ENCODE measurements at regions of chr2 and their contacts with region 1.

Region 1: DNA sequence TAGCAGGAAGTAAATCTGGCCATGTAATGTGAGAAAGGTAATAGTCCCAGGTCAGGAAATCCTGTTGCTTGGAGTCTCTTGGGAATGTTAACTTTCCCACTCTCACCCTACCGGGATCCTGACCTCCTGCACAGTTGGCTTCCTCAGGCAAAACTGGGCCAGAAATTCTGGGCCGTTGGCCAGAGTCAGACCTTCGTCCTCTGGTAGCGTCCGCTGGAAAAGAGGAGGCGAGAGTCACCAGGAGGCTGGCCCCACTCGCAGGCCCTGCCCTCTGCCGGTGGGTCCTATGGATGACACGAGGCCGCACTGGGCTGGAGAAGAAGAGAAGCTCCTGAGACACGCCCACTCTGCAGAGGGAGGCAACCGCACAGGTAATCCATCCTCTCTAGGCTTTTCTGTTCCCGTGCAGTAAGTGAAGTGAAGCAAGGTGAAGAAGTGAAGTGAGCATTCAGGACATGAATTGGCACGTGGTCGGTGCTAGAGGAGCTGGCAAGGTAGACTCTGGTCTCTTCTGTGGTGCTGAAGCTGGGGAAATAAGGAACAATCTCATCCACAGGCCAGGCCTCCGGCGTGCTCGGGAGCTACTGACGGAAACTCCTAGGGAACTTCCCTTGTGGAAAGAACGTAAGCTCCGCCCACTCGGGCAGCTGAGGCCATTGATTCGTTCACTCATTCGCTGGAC is 182.7 kb upstream of the GLI2 start:
- H3K4me3 ChIP-seq: peak overlapping the region; percentile 24
- H3K27ac ChIP-seq: no peak overlapping the region
- H3K4me1 ChIP-seq: no peaks in the 10 kb centered on the region
- CTCF ChIP-seq: 0 out of 2 replicates have a peak, but pooled peaks have one; percentile 18

Region 2: DNA sequence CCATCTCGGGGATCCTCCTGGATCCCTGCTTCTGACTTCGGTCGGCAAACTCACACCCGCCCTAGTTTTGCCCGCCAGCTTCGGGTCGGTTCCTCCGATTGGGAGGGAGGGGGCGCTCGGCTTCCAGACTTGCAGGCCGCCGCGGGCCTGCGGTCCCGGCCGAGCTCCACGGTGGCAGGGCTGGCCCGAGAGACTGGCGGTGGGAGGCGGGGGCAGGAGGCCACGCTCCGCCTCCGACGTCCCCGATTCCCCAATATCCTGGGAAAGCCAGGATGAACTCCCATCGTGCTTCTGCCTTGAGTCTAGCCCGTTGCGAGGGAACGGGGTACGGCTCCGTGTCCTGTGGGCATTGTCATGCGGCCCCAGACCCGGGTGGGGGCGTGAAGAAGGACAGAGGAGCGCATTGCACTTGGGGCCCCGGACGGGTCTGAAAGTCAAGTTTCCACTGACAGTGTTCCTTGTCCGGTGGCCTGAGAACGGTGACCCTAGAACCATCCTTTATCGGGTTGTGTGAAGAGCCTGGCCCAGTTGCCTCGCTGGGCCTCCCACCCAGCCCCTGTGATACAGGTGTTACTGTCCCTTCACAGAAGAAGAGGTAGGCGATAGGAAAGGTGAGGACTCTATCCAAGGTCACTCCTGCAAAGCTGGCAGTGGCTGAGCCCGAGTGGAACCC is 209.4 kb before region 1 on chr2:
- CTCF ChIA-PET with region 1: interaction called, 36 read pairs
- POLR2A ChIA-PET with region 1: interaction called, 3 read pairs
- H3K4me3 ChIP-seq: no peak overlapping the region
- H3K27ac ChIP-seq: no peak overlapping the region
- H3K4me1 ChIP-seq: peaks cover 13% of the 10 kb centered on the region
- CTCF ChIP-seq: peak; percentile 90

Region 3: DNA sequence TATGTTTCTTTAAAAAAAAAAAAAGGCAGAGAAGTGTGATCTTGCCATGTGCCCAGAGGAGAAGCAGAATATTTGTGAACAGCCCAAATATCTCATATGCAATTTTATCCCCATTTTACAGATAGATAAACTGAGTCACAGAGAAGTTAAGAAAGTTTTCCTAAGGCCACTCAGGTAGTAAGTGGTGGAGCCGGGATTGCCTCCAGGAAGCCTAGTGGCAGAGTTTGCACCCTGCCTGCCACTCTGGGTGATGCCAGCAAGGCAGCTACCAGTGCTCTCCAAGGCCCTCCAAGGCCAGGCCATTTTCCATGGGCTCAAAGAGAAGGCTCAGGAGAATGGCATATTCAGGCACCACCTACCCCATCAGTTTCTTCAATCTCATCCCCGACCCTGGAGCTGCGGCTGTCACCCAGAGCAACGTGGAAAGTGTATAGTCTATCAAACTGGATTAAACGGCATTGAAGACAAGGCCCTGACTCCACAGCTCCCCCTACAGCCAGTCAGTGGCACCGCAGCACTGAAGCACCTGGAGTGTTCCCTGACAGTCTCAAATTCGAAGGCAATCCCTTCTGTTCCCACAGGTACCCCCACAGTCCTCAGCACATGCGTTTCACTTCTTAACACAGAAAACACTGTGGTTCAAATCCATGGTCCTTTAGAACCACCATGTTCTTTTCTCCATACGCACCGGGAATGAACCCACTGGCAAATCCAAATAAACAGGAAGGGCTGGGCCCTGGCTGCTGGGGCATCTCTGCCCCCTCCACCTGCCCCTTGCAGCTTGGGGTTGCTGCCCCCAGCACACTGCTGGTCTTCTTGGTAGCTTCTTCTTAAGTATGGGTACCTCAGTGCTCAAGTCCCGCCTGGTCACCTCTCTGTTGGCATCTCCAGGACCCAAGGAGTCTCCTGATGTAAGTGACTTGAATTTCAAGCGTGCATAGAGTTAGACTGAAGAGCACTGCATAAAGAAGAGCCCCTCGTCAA is 31.7 kb before region 1 on chr2:
- CTCF ChIA-PET with region 1: interaction called, 14 read pairs
- POLR2A ChIA-PET with region 1: no interaction called
- H3K4me3 ChIP-seq: no peak overlapping the region
- H3K27ac ChIP-seq: no peak overlapping the region
- H3K4me1 ChIP-seq: no peaks in the 10 kb centered on the region
- CTCF ChIP-seq: peak; percentile 41

Region 4: GRCh38 chr2:120541553-120541932 is 11.4 kb before region 1 on chr2:
- CTCF ChIA-PET with region 1: interaction called, 18 read pairs
- POLR2A ChIA-PET with region 1: no interaction called
- H3K4me3 ChIP-seq: no peak overlapping the region
- H3K27ac ChIP-seq: no peak overlapping the region
- H3K4me1 ChIP-seq: peaks cover 9% of the 10 kb centered on the region
- CTCF ChIP-seq: no peak

Region 5: DNA sequence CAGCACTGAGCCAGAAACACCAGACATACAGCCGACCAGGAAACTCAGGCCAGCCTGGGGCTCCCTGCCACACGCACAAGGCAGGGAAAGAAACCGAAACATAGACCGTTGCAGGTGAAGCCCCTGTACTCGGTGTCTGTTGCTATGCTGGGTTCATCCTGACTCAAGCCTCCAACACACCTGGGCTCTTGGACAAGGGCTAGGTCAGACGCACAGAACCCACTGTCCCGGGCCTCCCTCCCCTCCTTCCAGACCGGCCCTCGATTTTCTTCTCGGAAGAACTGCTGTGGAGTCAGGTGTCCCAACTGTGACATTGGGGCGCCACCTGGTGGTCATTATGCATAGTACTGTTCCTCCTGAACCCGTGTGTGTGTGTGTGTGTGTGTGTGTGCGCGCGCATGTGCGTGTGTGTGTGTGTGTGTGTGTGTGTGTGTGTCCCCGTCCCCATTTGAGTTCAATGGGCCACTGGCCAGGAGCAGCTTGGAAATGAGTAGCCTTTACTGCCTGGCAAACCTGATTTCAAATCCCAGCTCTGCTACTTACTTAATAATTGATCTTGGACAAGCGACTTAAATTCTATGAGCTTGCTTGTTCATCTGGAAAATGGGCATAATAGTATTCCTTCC is 127.3 kb after region 1 on chr2:
- CTCF ChIA-PET with region 1: interaction called, 11 read pairs
- POLR2A ChIA-PET with region 1: no interaction called
- H3K4me3 ChIP-seq: no peak overlapping the region
- H3K27ac ChIP-seq: no peak overlapping the region
- H3K4me1 ChIP-seq: no peaks in the 10 kb centered on the region
- CTCF ChIP-seq: peak; percentile 87

Measured in HEK293 (cell line).